Aorta (tissue), 5 donors: ENCODE measurements at regions of chr2 and their contacts with region 1.

Region 1: GRCh38 chr2:174436351-174436750 is 40.8 kb downstream of the SCRN3 start:
- DNase-seq: no peak
- ATAC-seq: no peak
- H3K4me3 ChIP-seq: no peak overlapping the region
- H3K27ac ChIP-seq: no peak overlapping the region
- H3K4me1 ChIP-seq: peaks cover 3% of the 10 kb centered on the region in 2 donors
- H3K27me3 ChIP-seq: no peaks in the 10 kb centered on the region

Region 2: DNA sequence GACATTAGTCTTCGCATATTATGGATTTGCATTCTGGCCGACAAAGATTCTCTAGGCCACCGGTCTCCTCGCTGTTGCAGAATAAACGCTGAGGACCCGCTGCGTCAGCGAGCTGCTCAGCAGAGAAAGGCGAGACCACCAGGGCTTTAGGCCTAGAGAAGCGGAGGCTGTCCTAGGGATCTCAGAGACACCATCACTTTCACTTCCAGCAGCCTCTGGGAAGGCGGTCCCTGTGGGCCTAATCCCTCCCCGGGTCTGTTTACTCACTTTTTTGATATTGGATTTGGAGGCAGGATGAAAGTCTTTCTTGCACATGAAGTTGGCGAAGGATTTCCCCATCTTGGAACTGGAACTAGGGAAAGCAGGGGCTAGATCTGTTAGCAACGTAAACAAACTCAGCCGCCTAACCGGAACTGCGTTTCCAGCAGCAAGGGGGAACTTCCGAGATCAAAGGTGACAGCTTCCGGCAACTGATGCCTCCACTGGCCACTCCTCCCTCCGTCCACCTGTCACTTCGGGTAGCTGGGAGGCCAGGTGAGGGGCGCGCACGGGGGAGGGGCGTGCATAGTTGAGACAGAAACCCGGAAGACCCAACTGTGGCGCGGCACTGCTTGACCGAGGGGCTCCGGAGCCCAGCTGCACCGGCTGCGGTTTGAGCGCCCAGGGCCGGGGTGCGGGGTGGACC is 40.9 kb before region 1 on chr2 and contains the start of gene SCRN3:
- intact Hi-C with region 1: loop called in 1 of 2 experiments (anchors 2 kb)
- DNase-seq: peak; percentile 80 to 85
- ATAC-seq: peak; percentile 93
- H3K4me3 ChIP-seq: peak within 1 kb of the TSS; percentile 79 to 99
- H3K27ac ChIP-seq: peak within 1 kb of the TSS in 1 of 2 donors; percentile 91
- H3K4me1 ChIP-seq: peaks cover 1 to 3% of the 10 kb centered on the region in 2 donors
- H3K27me3 ChIP-seq: no peaks in the 10 kb centered on the region
- total RNA-seq, gene SCRN3: 13.9 to 22.6 TPM